Ascending aorta (tissue), 2 donors: ENCODE measurements at regions of chr4 and their contacts with region 1.

Region 1: GRCh38 chr4:139453371-139454110 is 380 bp upstream of the RAB33B start:
- DNase-seq: peak; percentile 95 to 99
- H3K4me3 ChIP-seq: peak overlapping the region; percentile 92 to 93
- H3K27ac ChIP-seq: peak overlapping the region; percentile 94 to 98
- H3K4me1 ChIP-seq: peaks cover 5 to 21% of the 10 kb centered on the region in 2 donors
- H3K27me3 ChIP-seq: no peaks in the 10 kb centered on the region
- CTCF ChIP-seq: peak in 2 of 3 experiments; percentile 4 to 28

Region 2: GRCh38 chr4:139083956-139084803 is 369.4 kb before region 1 on chr4:
- intact Hi-C with region 1: loop called (anchors 5 kb)
- DNase-seq: peak; percentile 60 to 93
- H3K4me3 ChIP-seq: peak overlapping the region; percentile 83 to 92
- H3K27ac ChIP-seq: peak overlapping the region; percentile 81 to 97
- H3K4me1 ChIP-seq: peaks cover 0 to 6% of the 10 kb centered on the region in 2 donors
- H3K27me3 ChIP-seq: no peaks in the 10 kb centered on the region
- CTCF ChIP-seq: peak in 2 of 3 experiments; percentile 25 to 40

Region 3: GRCh38 chr4:139501927-139502899 is 48.7 kb after region 1 on chr4:
- intact Hi-C with region 1: loop called (anchors 5 kb)
- DNase-seq: no peak
- H3K4me3 ChIP-seq: no peak overlapping the region
- H3K27ac ChIP-seq: no peak overlapping the region
- H3K4me1 ChIP-seq: no peaks in the 10 kb centered on the region
- H3K27me3 ChIP-seq: no peaks in the 10 kb centered on the region
- CTCF ChIP-seq: no peak

Region 4: DNA sequence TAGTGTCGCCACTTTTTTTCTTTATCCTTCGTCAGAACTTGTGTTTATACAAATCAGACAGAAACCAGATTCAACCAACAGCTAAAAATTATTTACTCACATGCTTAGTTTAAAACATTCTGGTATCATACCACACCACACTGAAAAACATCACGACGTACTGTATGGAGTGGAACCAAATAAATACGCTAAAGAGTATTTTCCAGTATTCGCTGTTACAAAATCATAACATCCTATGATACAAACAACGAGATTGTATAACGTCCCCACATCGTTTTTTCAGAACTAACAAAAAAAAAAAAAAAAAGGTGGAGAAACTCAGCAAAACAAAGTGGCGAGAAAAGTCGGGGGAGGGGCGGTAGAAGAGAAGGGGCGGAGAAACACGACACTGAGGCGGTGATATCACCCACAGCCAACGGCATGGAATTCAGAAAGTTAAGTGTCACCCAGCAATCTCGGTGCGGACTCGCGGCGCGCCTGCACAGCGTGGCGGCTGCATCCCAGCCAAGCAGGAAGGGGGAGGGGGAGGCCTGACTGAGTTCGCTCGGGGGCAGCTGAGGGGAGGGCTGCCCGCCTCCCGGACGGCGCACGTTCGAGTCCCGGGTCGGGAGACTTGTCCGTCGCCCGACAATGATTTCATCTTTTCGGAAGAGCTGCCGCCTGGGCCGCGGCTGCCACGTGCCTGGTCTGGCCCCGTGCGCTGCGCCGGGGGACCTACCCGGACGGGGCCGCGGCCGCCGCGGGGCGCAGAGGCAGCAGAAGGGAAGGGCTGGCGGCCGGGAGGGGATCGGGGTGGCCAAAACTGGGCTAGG is 101.6 kb after region 1 on chr4:
- intact Hi-C with region 1: loop called (anchors 1 kb)
- DNase-seq: peak; percentile 74 to 95
- H3K4me3 ChIP-seq: peak overlapping the region; percentile 82 to 99
- H3K27ac ChIP-seq: peak overlapping the region; percentile 99 to 100
- H3K4me1 ChIP-seq: peaks cover 0 to 30% of the 10 kb centered on the region in 2 donors
- H3K27me3 ChIP-seq: no peaks in the 10 kb centered on the region
- CTCF ChIP-seq: no peak

Region 5: DNA sequence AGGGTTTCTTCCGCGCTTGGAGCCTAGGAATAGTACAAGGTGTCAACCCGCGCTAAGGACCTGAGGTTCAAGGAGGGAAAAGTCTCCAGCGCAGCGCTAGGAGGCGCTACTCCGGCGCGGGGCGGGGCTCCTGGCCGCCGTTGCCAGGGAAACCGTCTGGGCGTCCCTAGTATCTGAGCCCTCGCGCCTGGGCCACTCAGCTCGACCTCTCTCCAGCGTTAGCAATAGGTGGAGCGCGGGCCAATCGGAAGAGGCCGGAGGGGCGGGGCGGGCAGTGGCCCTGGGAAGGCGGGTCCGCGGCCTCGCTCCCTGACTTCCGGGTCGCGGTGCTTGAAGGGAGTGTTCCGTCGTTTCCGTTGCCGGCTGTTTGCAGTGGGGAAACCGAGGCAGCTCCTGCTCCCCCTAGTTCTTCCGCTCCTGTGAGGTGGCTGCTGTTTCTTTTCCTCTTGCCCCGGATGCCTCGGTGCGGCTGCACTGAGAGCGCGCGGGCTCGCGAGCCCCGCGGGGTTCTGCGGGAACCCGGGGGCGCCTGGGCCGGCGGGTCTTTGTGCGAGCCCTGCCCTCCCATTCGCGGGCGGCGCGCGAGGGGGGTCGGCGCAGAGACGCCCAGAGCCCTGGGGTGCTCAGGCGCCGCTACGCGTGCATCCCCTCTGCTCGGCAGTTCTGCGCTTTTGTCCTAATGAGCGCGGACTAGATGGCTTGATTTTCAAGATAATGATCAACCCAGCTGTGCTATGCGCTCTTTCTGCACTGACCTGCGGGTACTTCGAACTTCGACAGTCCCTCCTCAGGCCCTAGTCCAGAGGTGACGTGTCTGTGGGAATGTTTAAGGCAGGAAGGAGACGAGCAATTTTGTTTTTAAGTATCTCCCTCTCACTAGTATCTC is 1070.6 kb after region 1 on chr4 and contains the start of gene ELMOD2:
- intact Hi-C with region 1: loop called (anchors 10 kb)
- DNase-seq: peak; percentile 95 to 99
- H3K4me3 ChIP-seq: peak within 1 kb of the TSS; percentile 87 to 97
- H3K27ac ChIP-seq: peak within 1 kb of the TSS; percentile 66 to 92
- H3K4me1 ChIP-seq: peaks cover 0 to 4% of the 10 kb centered on the region in 2 donors
- H3K27me3 ChIP-seq: no peaks in the 10 kb centered on the region
- CTCF ChIP-seq: peak; percentile 88 to 97 (median 96)
- total RNA-seq, gene ELMOD2: 3.9 TPM